Lower leg skin (tissue), 4 donors: ENCODE measurements at regions of chr2 and their contacts with region 1.

Region 1: DNA sequence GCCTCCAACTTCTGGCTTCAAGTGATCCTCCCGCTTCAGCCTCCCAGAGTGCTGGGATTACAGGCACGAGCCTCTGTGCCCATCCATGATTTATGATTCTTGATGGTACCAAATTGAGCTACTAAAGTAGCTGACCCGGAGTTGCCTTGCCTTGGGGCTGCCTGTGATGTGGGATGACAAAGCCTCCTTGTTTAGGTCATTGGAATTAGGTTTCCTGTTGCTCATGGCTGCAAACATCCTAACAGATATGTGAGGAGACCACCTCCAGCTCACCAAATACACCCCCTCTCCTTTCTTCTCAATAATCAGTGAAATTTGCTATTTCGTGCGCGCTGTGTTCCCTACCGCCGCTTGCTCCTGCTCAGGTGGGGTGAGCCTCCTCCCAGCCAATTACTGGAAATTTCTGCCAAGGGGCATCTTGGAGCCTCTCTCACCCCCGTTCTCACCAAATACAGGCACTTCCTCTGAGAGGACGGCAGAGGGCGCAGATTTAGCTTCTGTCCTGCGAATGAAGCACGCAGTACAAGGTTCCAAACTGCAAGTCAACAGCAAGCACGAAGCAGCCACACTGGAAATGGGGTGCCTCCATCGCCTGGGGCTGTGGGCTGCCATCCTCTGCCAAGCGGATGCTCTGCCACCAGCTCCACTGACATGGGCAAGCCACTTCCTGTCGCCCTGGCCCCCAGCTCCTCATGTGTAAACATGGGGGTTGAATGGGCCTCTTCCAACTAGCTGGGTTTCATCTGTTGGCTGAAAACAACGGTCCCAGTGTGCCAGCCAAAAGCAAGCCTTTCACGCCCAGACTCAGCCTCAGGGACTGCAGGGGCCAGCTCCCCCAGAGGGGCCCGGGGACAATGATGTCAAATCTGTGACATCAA is 71.7 kb downstream of the NCAPH start:
- DNase-seq: peak; percentile 47 to 92
- H3K4me3 ChIP-seq: no peak overlapping the region
- CTCF ChIP-seq: peak in 1 of 3 donors; percentile 75
- POLR2A ChIP-seq: no peak

Region 2: DNA sequence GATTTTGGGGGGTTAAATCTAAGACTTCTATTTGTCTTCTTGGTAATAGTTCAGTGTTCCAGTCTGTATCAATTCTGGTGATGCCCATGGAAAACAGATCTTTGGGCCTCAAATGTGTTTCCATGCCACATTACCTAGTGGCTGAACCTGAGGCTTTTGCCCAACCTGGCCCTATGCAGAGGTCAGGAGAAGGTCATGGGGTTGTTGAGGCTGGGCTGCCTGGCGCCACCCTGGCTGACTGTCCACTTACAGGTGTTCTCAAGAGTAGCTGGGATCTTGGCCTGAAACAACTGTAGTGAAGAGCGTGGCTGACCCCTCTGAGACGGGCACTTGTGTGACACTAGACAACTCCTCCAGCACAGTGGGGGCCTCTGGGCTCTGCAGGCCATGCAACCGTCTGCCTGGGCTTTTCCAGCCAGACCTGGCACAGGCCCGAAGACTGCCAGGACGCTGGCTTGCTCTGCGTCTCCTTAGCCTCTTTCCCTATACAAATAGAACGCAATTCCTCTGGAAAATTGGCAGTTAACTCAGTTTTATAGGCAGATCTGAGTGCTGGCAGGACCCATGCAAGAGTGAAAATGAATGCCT is 687.7 kb before region 1 on chr2:
- intact Hi-C with region 1: no loop called
- DNase-seq: peak in 1 of 2 donors; percentile 72
- H3K4me3 ChIP-seq: peak overlapping the region; percentile 4
- CTCF ChIP-seq: no peak
- POLR2A ChIP-seq: no peak

Region 3: GRCh38 chr2:96131152-96131812 is 276.0 kb before region 1 on chr2:
- intact Hi-C with region 1: no loop called
- DNase-seq: no peak
- H3K4me3 ChIP-seq: no peak overlapping the region
- CTCF ChIP-seq: no peak
- POLR2A ChIP-seq: no peak

Region 4: DNA sequence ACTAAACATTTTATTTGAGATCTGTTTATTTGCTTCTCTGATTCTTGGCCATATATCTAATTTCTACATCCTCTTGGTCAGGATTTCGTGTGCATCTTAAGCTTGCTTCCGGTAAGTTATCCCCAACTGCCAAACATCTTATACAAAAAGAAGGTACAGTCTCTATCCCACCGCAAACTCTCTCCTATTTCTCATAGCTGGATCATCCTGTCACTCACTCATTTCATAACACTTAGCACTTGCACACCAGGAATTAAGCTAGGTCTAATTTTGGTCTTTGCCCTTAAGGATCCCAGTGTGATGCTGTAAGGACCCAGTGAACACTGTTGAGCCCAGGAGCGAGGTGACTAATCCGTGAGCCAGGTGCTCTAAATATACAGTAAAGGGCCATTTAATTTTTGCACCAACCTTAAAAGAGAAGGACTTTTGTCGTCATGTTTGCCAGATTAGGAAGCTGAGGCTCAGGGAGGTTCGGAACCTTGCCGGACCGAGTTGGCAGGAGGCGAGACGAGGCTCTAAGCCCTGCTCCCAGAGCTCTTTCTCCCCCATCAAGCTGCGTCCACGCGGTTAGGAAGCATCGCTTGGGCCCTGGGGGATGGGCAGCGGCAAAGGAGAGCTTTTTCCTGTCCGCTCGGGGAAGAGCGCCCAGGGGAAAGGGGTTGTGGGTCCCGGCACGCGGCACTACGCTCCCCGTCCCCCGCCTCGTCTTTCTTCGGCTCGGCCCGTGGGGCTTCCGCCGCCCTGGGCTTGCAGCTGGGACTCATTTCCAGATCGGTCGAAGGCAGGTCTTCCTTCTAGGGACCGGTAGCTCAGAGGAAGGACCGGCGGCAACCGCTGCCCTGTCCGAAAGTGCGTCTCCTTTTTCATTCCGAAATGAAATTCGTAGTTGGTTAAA is 86.3 kb before region 1 on chr2:
- intact Hi-C with region 1: no loop called
- DNase-seq: peak in 1 of 2 donors; percentile 85
- H3K4me3 ChIP-seq: peak overlapping the region; percentile 38
- CTCF ChIP-seq: no peak
- POLR2A ChIP-seq: no peak

Region 5: DNA sequence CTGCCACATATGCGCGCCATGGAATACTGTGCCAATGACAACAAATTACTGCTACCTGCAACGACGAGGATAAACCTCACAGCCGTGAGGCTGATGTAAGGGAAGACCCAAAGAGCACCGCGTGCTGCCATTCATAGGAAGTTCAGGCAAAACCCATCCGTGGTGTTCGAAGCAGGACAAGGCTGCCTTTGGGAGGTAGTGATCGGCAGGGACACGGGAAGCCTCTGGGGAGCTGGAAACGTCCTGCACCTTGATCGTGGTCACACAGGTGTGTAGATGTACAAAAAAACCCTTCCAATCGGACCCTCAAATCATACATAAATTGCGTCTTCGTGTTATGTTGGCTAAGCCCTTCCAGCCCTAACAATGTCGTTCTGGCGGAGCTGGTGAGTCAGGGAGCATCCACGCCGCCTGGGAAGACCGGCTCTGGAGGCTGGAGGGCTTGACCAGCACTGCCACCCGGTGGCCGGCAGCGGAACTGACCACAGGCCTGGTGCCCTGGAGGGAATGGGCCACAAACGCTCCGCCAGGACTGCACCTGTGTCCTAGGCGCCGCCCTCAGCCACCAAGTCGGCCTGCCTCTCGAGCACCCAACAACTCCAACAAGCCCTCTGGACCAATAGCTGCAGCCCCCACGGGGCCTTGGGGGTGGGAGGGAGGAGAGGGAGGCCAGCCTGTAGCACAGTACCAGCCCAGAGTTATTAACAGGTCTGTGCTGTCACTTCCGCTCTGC is 102.0 kb after region 1 on chr2:
- intact Hi-C with region 1: loop called (anchors 10 kb)
- DNase-seq: peak; percentile 72 to 96
- H3K4me3 ChIP-seq: no peak overlapping the region
- CTCF ChIP-seq: peak in 1 of 3 donors; percentile 61
- POLR2A ChIP-seq: no peak